Activated CD4-positive, alpha-beta T cell treated with anti-CD3 and anti-CD28 coated beads for 36 hours (primary cell): ENCODE measurements at regions of chr13 and their contacts with region 1.

Region 1: GRCh38 chr13:48975856-48976575 is at the start of gene FNDC3A:
- DNase-seq: peak; percentile 95
- ATAC-seq: peak; percentile 78
- H3K4me3 Mint-ChIP-seq: peak within 1 kb of the TSS; percentile 91
- H3K27ac Mint-ChIP-seq: peak within 1 kb of the TSS; percentile 98
- H3K4me1 Mint-ChIP-seq: peaks cover 34% of the 10 kb centered on the region
- H3K27me3 Mint-ChIP-seq: no peaks in the 10 kb centered on the region
- total RNA-seq, gene FNDC3A: 20.8 to 26.9 TPM

Region 2: DNA sequence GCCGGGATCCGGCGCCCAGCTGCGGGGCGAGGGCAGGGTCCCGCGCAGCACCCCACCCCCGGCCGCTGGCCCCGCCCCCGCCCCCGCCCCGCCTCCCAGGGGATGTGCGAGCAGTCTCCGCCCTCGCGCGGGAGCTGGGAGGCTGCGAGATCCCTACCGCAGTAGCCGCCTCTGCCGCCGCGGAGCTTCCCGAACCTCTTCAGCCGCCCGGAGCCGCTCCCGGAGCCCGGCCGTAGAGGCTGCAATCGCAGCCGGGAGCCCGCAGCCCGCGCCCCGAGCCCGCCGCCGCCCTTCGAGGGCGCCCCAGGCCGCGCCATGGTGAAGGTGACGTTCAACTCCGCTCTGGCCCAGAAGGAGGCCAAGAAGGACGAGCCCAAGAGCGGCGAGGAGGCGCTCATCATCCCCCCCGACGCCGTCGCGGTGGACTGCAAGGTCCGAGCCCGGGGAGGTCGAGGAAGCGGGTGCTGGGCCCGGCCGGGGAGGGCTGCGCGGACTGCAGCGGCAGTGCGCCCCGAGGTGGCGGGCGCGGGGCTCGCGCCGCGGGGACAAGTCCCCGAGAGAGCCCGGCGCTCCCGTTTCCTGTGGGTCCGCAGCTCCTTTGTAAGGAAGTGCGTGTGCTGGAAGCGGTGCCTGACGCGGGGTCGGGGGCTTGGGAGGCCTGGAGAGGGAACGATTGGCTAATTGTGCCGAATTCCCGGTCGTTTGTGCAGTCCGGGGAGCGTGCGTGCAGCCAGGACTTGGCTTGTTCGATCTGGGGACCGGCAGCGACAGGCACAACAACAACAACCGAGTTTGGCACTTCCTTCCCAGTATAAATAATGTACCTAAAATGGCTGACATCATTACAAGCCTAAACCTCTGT is 742.7 kb before region 1 on chr13 and contains the start of gene ITM2B:
- CTCF ChIA-PET with region 1: no interaction called
- POLR2A ChIA-PET with region 1: no interaction called
- intact Hi-C with region 1: loop called in 1 of 2 experiments (anchors 2 kb)
- DNase-seq: peak; percentile 78
- ATAC-seq: peak; percentile 71
- H3K4me3 Mint-ChIP-seq: peak within 1 kb of the TSS; percentile 84
- H3K27ac Mint-ChIP-seq: peak within 1 kb of the TSS; percentile 89
- H3K4me1 Mint-ChIP-seq: peaks cover 56% of the 10 kb centered on the region
- H3K27me3 Mint-ChIP-seq: peaks cover 2% of the 10 kb centered on the region
- total RNA-seq, gene ITM2B: 67.0 to 96.5 TPM

Region 3: GRCh38 chr13:48828962-48829421 is 147.0 kb before region 1 on chr13:
- CTCF ChIA-PET with region 1: no interaction called
- POLR2A ChIA-PET with region 1: interaction called, 3 read pairs
- intact Hi-C with region 1: loop called (anchors 1 to 2 kb)
- DNase-seq: peak; percentile 24
- ATAC-seq: peak; percentile 72
- H3K4me3 Mint-ChIP-seq: no peak overlapping the region
- H3K27ac Mint-ChIP-seq: no peak overlapping the region
- H3K4me1 Mint-ChIP-seq: peaks cover 43% of the 10 kb centered on the region
- H3K27me3 Mint-ChIP-seq: no peaks in the 10 kb centered on the region

Region 4: DNA sequence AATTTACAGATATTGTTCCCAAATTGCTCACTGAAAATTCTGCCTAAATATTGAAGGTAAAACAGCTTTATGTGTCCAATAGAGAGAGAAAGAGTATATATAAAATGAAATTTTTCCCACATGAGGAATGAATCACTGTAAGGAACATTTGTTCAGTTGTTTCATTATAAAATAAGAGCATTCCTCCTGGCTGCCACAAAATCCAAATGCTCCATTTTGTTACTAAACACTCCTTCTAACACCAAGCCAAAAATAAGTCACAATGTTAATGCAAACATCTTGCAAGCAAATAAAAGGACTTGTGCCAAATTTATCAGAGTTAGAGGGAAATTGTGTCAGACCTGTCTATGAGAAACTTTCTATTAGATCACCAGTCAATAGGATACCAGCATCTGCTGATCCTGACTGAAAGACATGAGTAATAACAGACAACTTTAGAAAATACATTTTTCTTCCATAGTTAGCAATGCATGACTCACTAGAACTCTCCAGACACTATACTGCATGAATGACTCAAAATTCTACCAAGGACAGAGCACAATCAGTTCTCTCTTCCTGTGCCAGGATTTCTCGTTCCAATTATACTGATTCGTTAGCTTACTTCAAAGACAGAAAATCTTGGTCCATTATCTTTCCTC is 83.8 kb before region 1 on chr13:
- CTCF ChIA-PET with region 1: no interaction called
- POLR2A ChIA-PET with region 1: no interaction called
- intact Hi-C with region 1: loop called in 1 of 2 experiments (anchors 2 kb)
- DNase-seq: no peak
- ATAC-seq: peak; percentile 97
- H3K4me3 Mint-ChIP-seq: no peak overlapping the region
- H3K27ac Mint-ChIP-seq: peak overlapping the region; percentile 51
- H3K4me1 Mint-ChIP-seq: peaks cover 34% of the 10 kb centered on the region
- H3K27me3 Mint-ChIP-seq: peaks cover 7% of the 10 kb centered on the region

Region 5: DNA sequence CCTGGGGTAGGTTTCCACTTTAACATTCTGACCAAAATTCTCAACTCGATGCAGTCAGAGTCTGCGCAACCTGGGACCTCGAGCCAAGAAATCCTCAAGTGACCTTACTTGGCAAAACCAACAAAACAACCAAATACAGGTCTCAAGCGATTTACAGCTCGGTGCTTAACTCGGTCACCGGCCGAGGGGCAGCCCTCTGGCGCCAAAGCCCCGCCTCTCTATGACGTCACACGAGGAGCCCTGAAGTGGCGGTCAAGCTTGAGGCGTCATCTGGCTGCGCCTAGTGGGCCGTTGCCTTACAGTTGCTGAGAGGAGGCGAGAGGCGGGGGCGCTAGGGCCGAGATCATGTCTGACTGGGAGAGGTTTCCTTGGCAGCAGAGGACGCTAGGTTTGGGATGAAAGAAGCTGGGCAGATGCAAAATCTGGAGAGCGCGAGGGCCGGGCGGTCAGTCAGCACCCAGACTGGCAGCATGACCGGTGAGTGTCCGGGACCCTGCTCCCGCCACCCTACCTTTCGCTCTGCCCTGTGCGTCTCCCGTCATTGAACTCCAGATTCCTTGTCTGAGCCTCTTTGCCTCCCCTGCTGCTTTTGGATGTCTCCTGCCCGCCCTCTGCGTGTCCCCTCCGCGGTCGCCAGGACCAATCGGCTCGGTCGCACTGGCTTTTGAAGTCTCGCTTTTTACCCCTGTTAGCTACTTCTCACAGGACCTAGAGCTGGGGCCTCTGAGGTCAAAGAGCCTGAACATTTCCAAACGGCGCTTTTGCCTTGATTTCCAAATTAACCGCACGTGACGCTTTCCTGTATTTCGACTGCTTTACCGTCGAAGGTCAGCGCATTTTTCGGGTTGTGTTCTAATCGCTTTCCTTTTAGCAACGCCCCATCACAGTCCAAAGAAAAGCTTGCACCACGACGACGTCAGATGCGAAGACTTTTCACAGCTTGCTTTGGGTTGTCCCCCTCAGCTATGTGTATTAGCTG is 271.9 kb after region 1 on chr13 and contains the start of gene CDADC1:
- CTCF ChIA-PET with region 1: no interaction called
- POLR2A ChIA-PET with region 1: no interaction called
- intact Hi-C with region 1: loop called in 1 of 2 experiments (anchors 5 kb)
- DNase-seq: peak; percentile 96
- ATAC-seq: peak; percentile 94
- H3K4me3 Mint-ChIP-seq: peak within 1 kb of the TSS; percentile 92
- H3K27ac Mint-ChIP-seq: peak within 1 kb of the TSS; percentile 96
- H3K4me1 Mint-ChIP-seq: peaks cover 34% of the 10 kb centered on the region
- H3K27me3 Mint-ChIP-seq: peaks cover 2% of the 10 kb centered on the region
- total RNA-seq, gene CDADC1: 8.5 to 9.7 TPM

Region 6: DNA sequence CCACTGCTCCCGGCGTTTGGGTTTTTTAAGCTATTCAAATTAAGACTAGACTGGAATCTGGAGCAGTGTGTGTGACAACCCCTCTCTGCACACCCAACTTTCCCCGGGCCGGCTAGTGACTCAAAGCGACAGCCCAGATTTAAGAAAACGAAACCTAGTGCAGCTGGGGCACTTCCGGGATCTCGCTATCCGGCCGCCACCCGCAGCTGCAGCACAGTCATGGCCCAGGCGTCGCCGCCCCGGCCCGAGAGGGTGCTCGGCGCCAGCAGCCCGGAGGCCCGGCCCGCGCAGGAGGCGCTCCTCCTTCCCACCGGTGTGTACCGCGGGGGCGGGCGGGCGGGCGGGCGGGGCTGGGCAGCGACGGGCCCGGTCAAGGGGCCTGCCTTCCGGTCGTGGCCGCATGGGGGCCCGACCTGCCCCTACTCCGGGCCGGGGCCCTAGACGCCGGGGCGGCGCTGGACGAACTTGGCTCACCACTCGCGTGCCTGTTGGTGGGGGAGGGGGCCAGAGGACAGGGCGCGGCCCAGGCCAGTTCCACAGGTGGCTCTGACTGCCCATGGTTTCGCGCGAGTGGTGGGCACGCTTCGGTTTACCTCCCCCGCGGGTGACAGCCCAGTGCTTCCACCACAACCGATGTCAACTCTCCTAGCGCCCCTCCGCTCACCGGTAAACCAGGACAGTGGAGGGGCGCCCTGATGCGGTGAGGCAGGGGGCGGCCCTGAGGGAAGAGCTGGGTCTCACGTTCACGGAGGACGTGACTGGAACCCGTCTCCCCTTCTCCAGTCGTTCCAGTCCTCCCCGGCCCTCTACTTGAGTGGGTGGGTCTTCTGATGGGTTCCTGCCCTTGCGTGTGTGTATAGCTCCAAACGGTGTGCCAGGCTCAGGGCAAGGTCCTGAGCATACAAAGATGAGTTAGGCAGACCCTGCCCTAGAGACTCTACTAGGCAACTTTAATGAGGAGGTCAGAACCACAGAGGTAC is 520.1 kb after region 1 on chr13 and contains the start of gene PHF11:
- CTCF ChIA-PET with region 1: no interaction called
- POLR2A ChIA-PET with region 1: no interaction called
- intact Hi-C with region 1: loop called in 1 of 2 experiments (anchors 2 kb)
- DNase-seq: peak; percentile 95
- ATAC-seq: peak; percentile 81
- H3K4me3 Mint-ChIP-seq: peak within 1 kb of the TSS; percentile 91
- H3K27ac Mint-ChIP-seq: peak within 1 kb of the TSS; percentile 99
- H3K4me1 Mint-ChIP-seq: peaks cover 49% of the 10 kb centered on the region
- H3K27me3 Mint-ChIP-seq: no peaks in the 10 kb centered on the region
- total RNA-seq, gene PHF11: 84.0 to 106 TPM